ENCODE measurements at regions of chr1 and their contacts with region 1.

Region 1: GRCh38 chr1:983799-984473 is 2.0 kb upstream of the PERM1 start:
- DNase-seq: no peak
- ATAC-seq: peak; percentile 88
- H3K4me3 ChIP-seq: no peak overlapping the region
- H3K27ac ChIP-seq: no peak overlapping the region
- H3K4me1 ChIP-seq: no peaks in the 10 kb centered on the region
- H3K27me3 ChIP-seq: no peaks in the 10 kb centered on the region
- CTCF ChIP-seq: peak; percentile 56 to 97 (median 78)
- EP300 ChIP-seq: no peak
- POLR2A ChIP-seq: no peak
- RAD21 ChIP-seq: peak; percentile 79

Region 2: GRCh38 chr1:972743-973467 is 11.0 kb before region 1 on chr1:
- CTCF ChIA-PET with region 1: no interaction called
- POLR2A ChIA-PET with region 1: no interaction called
- RAD21 ChIA-PET with region 1: no interaction called
- SMC1A ChIA-PET with region 1: no interaction called
- in situ Hi-C with region 1: no loop called
- intact Hi-C with region 1: no loop called
- DNase-seq: no peak
- ATAC-seq: no peak
- H3K4me3 ChIP-seq: no peak overlapping the region
- H3K27ac ChIP-seq: no peak overlapping the region
- H3K4me1 ChIP-seq: no peaks in the 10 kb centered on the region
- H3K27me3 ChIP-seq: no peaks in the 10 kb centered on the region
- CTCF ChIP-seq: no peak
- EP300 ChIP-seq: no peak
- POLR2A ChIP-seq: no peak
- RAD21 ChIP-seq: no peak

Region 3: GRCh38 chr1:999725-1000356 is 15.9 kb after region 1 on chr1 and contains the start of gene HES4:
- CTCF ChIA-PET with region 1: interaction called, 56 read pairs
- POLR2A ChIA-PET with region 1: interaction called, 4 read pairs
- RAD21 ChIA-PET with region 1: interaction called, 13 read pairs
- SMC1A ChIA-PET with region 1: interaction called, 4 read pairs
- in situ Hi-C with region 1: no loop called
- intact Hi-C with region 1: no loop called
- DNase-seq: no peak
- ATAC-seq: peak; percentile 59
- H3K4me3 ChIP-seq: peak within 1 kb of the TSS; percentile 66
- H3K27ac ChIP-seq: no peak within 1 kb of the TSS
- H3K4me1 ChIP-seq: peaks cover 19% of the 10 kb centered on the region
- H3K27me3 ChIP-seq: peaks cover 0 to 20% of the 10 kb centered on the region in 2 experiments; a peak in 2 of 4 replicates
- CTCF ChIP-seq: no peak
- EP300 ChIP-seq: no peak
- POLR2A ChIP-seq: 0 out of 2 replicates have a peak, but pooled peaks have one; percentile 16
- RAD21 ChIP-seq: no peak
- polyA plus RNA-seq, gene HES4: not detected

Region 4: DNA sequence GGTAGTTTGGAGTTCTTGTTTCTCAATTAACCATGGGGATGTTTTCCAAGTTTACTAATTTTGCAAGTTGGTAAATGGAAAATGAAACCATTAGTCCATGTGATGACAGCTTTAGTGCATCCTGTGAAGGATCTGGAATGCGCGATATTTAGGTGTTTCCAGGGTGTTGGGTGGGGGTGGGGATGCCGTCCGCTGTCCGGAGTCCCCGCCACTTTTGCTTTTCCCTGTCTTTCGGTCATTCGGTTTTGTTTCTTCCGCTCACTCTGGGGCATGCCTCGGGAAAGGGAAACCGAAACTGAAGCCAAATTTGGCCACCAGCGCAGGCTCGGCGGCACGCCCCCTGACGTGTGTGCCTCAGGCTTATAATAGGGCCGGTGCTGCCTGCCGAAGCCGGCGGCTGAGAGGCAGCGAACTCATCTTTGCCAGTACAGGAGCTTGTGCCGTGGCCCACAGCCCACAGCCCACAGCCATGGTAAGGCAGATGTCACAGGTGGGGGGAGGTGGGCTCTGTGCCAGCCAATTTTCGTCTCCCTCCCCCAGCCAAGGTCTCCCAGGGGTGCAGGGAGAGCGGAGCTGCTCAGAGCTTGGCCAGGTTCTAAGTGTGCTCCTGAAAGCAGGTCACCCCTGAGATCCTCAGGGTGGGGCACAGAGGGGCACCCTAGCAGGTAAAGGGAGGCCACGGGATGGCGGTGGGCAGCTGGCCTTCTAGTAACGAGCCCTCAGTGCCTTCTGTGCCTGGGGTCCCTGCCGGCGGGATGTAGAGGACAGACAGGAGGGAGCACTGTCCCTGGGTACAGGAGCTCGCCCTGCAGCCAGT is 29.4 kb after region 1 on chr1 and contains the start of gene ISG15:
- CTCF ChIA-PET with region 1: interaction called, 14 read pairs
- POLR2A ChIA-PET with region 1: interaction called, 7 read pairs
- RAD21 ChIA-PET with region 1: interaction called, 7 read pairs
- SMC1A ChIA-PET with region 1: interaction called, 13 read pairs
- in situ Hi-C with region 1: no loop called
- intact Hi-C with region 1: no loop called
- DNase-seq: peak; percentile 79
- ATAC-seq: peak; percentile 91
- H3K4me3 ChIP-seq: peak within 1 kb of the TSS; percentile 90
- H3K27ac ChIP-seq: peak within 1 kb of the TSS; percentile 92
- H3K4me1 ChIP-seq: peaks cover 12% of the 10 kb centered on the region
- H3K27me3 ChIP-seq: no peaks in the 10 kb centered on the region
- CTCF ChIP-seq: no peak
- EP300 ChIP-seq: peak in 1 of 2 experiments; percentile 39; a peak in 1 of 4 replicates
- POLR2A ChIP-seq: peak; percentile 81
- RAD21 ChIP-seq: no peak
- polyA plus RNA-seq, gene ISG15: 68.9 to 126 TPM

Region 5: GRCh38 chr1:1019122-1019999 is 35.4 kb after region 1 on chr1:
- CTCF ChIA-PET with region 1: interaction called, 14 read pairs
- POLR2A ChIA-PET with region 1: no interaction called
- RAD21 ChIA-PET with region 1: interaction called, 7 read pairs
- SMC1A ChIA-PET with region 1: interaction called, 13 read pairs
- in situ Hi-C with region 1: no loop called
- intact Hi-C with region 1: no loop called
- DNase-seq: no peak
- ATAC-seq: peak; percentile 64
- H3K4me3 ChIP-seq: no peak overlapping the region
- H3K27ac ChIP-seq: peak overlapping the region; percentile 65
- H3K4me1 ChIP-seq: peaks cover 14% of the 10 kb centered on the region
- H3K27me3 ChIP-seq: no peaks in the 10 kb centered on the region
- CTCF ChIP-seq: peak; percentile 31 to 60 (median 59)
- EP300 ChIP-seq: no peak
- POLR2A ChIP-seq: no peak; the same call in 1 of the 2 replicates
- RAD21 ChIP-seq: no peak; the same call in 1 of the 2 replicates

Region 6: GRCh38 chr1:1033009-1033587 is 49.2 kb after region 1 on chr1:
- CTCF ChIA-PET with region 1: interaction called, 36 read pairs
- POLR2A ChIA-PET with region 1: no interaction called
- RAD21 ChIA-PET with region 1: interaction called, 19 read pairs
- SMC1A ChIA-PET with region 1: interaction called, 8 read pairs
- in situ Hi-C with region 1: no loop called
- intact Hi-C with region 1: no loop called
- DNase-seq: peak; percentile 72
- ATAC-seq: peak; percentile 92
- H3K4me3 ChIP-seq: peak overlapping the region; percentile 50; the same call in 1 of the 2 replicates
- H3K27ac ChIP-seq: no peak overlapping the region
- H3K4me1 ChIP-seq: peaks cover 27% of the 10 kb centered on the region
- H3K27me3 ChIP-seq: no peaks in the 10 kb centered on the region
- CTCF ChIP-seq: peak; percentile 80 to 97 (median 84)
- EP300 ChIP-seq: 0 out of 4 replicates have a peak, but pooled peaks of 1 of the 2 experiments have one; percentile 35
- POLR2A ChIP-seq: no peak
- RAD21 ChIP-seq: peak; percentile 74

Region 7: DNA sequence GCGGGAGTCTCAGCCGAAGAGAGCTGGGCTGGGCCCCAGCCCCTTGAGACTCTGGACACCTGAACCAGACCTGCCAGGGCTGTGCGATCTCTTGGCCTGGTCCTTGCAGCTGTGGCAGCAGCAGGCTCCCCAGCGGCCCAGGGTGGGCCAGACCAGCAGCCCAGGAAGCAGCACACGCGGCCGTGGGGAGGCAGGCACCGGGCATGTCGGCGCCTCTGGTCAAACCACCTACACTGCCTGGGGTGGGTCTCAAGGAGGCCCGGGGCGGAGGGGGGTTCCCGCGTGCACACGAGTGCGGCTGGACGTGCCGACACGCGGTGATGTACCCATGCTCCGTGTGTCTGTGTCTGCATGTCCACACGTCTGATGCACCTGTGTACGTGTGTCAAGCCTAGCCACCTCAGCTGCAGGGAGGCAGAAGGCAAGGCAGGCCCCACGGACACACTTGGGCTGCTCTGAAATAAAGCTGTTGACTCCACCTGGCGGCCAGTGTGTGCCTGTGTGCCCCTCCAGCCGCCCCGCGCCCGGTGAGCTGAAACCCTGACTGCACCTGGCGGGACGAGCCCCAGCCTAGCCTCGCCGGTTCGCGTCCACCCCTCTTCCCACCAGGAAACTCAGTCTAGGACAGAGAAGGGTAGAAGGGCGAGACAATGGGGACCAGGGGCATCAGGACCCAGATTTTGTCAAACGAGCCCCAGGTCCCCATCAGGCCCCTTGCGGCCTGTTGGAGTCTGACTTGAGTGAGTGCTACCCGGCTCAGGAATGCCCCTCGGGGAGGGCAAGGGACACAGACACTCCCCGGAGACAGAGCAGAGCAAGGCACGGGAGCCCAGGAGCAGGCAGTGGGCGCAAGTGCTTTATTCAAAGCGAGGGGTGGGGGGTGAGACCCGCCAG is 307.9 kb after region 1 on chr1:
- CTCF ChIA-PET with region 1: interaction called, 7 read pairs
- POLR2A ChIA-PET with region 1: no interaction called
- RAD21 ChIA-PET with region 1: interaction called, 6 read pairs
- SMC1A ChIA-PET with region 1: interaction called, 4 read pairs
- in situ Hi-C with region 1: no loop called
- intact Hi-C with region 1: loop called (anchors 2 kb)
- DNase-seq: no peak
- ATAC-seq: peak; percentile 96
- H3K4me3 ChIP-seq: no peak overlapping the region
- H3K27ac ChIP-seq: no peak overlapping the region
- H3K4me1 ChIP-seq: no peaks in the 10 kb centered on the region
- H3K27me3 ChIP-seq: no peaks in the 10 kb centered on the region
- CTCF ChIP-seq: peak; percentile 78 to 85 (median 79)
- EP300 ChIP-seq: no peak
- POLR2A ChIP-seq: peak; percentile 60
- RAD21 ChIP-seq: peak; percentile 62

Measured in GM12878 (cell line).